ENCODE measurements at regions of chr6 and their contacts with region 1.

Region 1: DNA sequence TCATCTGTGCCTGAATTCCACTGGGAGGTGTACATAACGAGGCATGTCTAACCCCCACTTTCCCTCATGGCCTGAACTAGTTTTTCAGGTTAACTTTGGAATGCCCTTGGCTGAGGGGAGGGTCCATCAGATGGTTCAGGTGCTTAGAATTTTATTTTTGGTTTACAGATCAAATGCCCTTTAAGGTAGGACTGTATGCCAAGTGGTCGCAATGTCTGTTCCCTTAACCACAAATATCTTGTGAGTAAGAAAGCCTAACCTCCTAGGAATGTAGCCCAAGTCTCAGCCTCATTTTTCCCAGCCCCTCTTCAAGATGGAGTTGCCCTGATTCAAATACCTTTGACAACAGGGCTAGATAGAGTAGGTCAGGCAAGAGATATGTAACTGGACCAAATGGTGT is 78.4 kb downstream of the RNASET2 start:
- DNase-seq: no peak
- ATAC-seq: no peak
- H3K4me3 ChIP-seq: no peak overlapping the region
- H3K27ac ChIP-seq: no peak overlapping the region
- H3K4me1 ChIP-seq: no peaks in the 10 kb centered on the region
- H3K27me3 ChIP-seq: no peaks in the 10 kb centered on the region
- CTCF ChIP-seq: no peak
- EP300 ChIP-seq: no peak
- POLR2A ChIP-seq: no peak
- RAD21 ChIP-seq: no peak

Region 2: GRCh38 chr6:166898910-166899309 is 21.0 kb after region 1 on chr6:
- CTCF ChIA-PET with region 1: no interaction called
- POLR2A ChIA-PET with region 1: no interaction called
- RAD21 ChIA-PET with region 1: no interaction called
- SMC1A ChIA-PET with region 1: interaction called, 3 read pairs
- in situ Hi-C with region 1: no loop called
- intact Hi-C with region 1: loop called (anchors 1 kb)
- DNase-seq: no peak
- ATAC-seq: no peak
- H3K4me3 ChIP-seq: no peak overlapping the region
- H3K27ac ChIP-seq: no peak overlapping the region
- H3K4me1 ChIP-seq: no peaks in the 10 kb centered on the region
- H3K27me3 ChIP-seq: no peaks in the 10 kb centered on the region
- CTCF ChIP-seq: no peak
- EP300 ChIP-seq: no peak
- POLR2A ChIP-seq: no peak
- RAD21 ChIP-seq: no peak

Region 3: GRCh38 chr6:167093922-167094432 is 216.1 kb after region 1 on chr6:
- CTCF ChIA-PET with region 1: no interaction called
- POLR2A ChIA-PET with region 1: no interaction called
- RAD21 ChIA-PET with region 1: no interaction called
- SMC1A ChIA-PET with region 1: no interaction called
- in situ Hi-C with region 1: no loop called
- intact Hi-C with region 1: no loop called
- DNase-seq: peak; percentile 90
- ATAC-seq: peak; percentile 66
- H3K4me3 ChIP-seq: peak overlapping the region; percentile 70
- H3K27ac ChIP-seq: peak overlapping the region; percentile 99
- H3K4me1 ChIP-seq: peaks cover 74% of the 10 kb centered on the region
- H3K27me3 ChIP-seq: no peaks in the 10 kb centered on the region
- CTCF ChIP-seq: no peak
- EP300 ChIP-seq: peak; percentile 39 to 66; a peak in 2 of 4 replicates
- POLR2A ChIP-seq: peak; percentile 88
- RAD21 ChIP-seq: no peak

Region 4: GRCh38 chr6:167513778-167514177 is 635.9 kb after region 1 on chr6:
- CTCF ChIA-PET with region 1: no interaction called
- POLR2A ChIA-PET with region 1: no interaction called
- RAD21 ChIA-PET with region 1: no interaction called
- SMC1A ChIA-PET with region 1: no interaction called
- in situ Hi-C with region 1: no loop called
- intact Hi-C with region 1: no loop called
- DNase-seq: no peak
- ATAC-seq: no peak
- H3K4me3 ChIP-seq: no peak overlapping the region
- H3K27ac ChIP-seq: no peak overlapping the region
- H3K4me1 ChIP-seq: no peaks in the 10 kb centered on the region
- H3K27me3 ChIP-seq: no peaks in the 10 kb centered on the region
- CTCF ChIP-seq: no peak
- EP300 ChIP-seq: no peak
- POLR2A ChIP-seq: no peak
- RAD21 ChIP-seq: no peak